ENCODE measurements at regions of chr3 and their contacts with region 1.

Region 1: GRCh38 chr3:132352541-132353143 is 35.4 kb downstream of the ACP3 start:
- DNase-seq: peak; percentile 17 to 32
- ATAC-seq: peak; percentile 72 to 92
- H3K4me3 ChIP-seq: no peak overlapping the region
- H3K27ac ChIP-seq: no peak overlapping the region
- H3K4me1 ChIP-seq: peaks cover 3 to 6% of the 10 kb centered on the region in 2 donors
- H3K27me3 ChIP-seq: no peaks in the 10 kb centered on the region
- CTCF ChIP-seq: peak; percentile 63 to 85 (median 79)
- POLR2A ChIP-seq: no peak

Region 2: DNA sequence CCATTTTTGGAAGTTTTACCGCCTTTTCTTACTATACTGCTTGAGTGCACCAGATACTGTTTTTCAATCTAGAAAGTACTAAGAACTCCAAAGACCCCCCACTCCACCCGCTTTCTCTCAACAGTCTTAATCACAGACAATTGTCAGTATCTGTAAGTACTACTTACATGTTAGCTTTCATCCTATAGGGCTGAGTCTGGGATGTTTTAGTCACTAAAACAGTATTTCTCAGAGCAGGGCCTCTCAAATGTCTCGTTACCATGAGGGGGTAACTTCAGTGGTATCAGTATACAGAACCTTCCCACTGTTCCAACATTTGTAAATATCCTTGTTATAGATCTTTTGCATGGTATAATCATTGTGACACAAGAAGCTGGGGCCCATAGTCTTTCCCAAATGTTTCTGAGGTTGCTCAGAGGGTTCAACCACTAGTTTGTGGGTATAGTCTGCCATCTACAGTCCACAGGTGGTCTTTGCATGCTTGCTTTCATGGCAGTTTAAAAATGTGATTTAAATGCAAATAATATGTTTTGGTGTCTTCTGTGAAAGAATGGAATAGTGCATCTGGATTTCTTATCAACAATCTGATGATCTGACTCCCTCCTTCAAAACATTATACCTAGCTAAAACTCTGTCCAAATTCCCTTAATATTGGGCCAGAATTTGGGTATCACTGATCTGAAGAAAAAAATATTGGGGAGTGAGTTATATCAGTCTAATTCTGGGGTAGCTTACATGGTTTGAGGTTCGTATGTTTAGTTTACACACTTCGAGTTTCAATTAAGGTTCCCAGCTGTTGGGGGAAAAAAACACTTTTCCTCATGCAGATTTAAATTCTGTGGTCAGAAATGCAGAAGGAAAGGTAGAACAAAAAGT is 46.6 kb after region 1 on chr3:
- in situ Hi-C with region 1: no loop called
- intact Hi-C with region 1: loop called (anchors 2 kb)
- DNase-seq: no peak
- ATAC-seq: no peak
- H3K4me3 ChIP-seq: no peak overlapping the region
- H3K27ac ChIP-seq: no peak overlapping the region
- H3K4me1 ChIP-seq: no peaks in the 10 kb centered on the region
- H3K27me3 ChIP-seq: no peaks in the 10 kb centered on the region
- CTCF ChIP-seq: peak; percentile 15 to 65 (median 50)
- POLR2A ChIP-seq: no peak

Region 3: GRCh38 chr3:132445817-132446216 is 93.2 kb after region 1 on chr3:
- in situ Hi-C with region 1: no loop called
- intact Hi-C with region 1: loop called (anchors 5 kb)
- DNase-seq: no peak
- ATAC-seq: no peak
- H3K4me3 ChIP-seq: no peak overlapping the region
- H3K27ac ChIP-seq: no peak overlapping the region
- H3K4me1 ChIP-seq: peaks cover 18 to 25% of the 10 kb centered on the region in 2 donors
- H3K27me3 ChIP-seq: no peaks in the 10 kb centered on the region
- CTCF ChIP-seq: no peak
- POLR2A ChIP-seq: no peak